SK-N-SH (cell line): ENCODE measurements at regions of chr13 and their contacts with region 1.

Region 1: DNA sequence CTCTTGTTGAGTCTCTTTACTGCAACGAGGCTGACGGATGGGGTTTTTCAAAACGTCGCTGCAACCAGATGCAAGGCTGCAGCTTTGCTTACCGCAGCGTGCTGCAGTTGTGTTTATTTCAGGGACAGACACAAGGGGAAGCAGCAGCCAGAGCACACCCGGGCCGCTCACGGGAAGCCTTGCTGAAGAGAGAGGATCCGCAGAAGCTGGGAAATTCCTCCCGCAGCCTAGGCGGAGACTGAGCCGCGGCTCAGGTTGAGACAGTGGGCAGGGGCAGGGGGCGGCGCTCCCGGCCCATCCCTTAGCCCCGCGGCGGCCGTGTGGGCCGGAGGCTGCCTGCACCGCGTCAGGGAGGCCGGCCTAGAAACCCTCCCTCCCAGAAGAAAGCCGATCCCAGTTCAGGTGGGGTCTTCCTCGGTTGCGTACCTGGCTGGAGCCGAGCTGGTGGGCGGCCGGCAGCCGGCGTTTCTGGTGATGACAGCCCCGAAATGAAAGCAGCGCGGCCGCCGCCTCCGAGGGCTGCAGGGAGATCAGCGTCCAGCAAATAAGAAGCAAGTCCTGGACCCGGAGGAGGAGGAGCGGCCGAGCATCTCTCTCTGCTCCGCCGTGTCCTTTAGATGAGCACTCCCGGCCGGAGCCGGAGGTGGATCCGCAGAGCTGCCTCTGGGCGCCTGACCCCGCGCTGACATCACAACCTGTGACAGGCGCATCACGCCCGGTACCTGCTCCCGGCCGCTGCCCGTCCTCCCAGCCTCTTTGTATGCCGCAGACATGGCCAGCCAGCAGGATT is at the start of gene FRY:
- DNase-seq: peak; percentile 81
- H3K4me3 ChIP-seq: peak within 1 kb of the TSS; percentile 78 to 83
- H3K27ac ChIP-seq: peak within 1 kb of the TSS; percentile 50 to 85; a peak in 3 of 4 replicates
- H3K4me1 ChIP-seq: peaks cover 0 to 6% of the 10 kb centered on the region in 2 experiments; a peak in 2 of 4 replicates
- H3K27me3 ChIP-seq: no peaks in the 10 kb centered on the region
- CTCF ChIP-seq: no peak
- EP300 ChIP-seq: no peak
- RAD21 ChIP-seq: peak; percentile 46
- polyA plus RNA-seq, gene FRY: 1.4 and 2.1 TPM in 2 replicates

Region 2: DNA sequence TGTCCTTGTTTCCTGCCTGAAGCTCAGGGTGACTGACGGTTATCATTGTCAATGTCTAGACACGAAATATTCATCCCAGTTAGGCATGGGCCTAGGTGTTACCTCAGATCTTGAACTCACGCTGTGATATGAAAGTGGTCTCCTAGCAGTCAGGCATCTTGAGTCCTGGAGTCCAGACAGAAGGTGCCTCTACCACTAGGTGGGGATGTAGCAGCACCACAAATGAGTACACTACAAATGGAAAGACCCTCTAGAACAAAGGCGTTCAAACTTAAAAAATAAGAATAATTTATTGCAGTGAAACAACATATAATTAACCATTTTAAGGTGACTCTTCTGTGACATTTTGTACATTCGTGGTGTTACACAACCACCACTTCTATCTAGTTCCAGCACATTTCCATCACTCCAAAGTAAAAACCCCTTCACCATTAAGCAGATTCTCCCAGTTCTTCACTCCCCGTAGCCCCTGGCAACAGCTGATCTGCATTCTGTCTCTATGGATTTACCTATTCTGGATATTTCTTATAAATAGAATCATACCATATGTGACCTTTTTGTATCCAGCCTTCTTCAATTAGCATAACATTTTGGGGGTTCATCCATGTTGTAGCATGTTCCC is 11.5 kb before region 1 on chr13:
- CTCF ChIA-PET with region 1: interaction called, 11 read pairs
- POLR2A ChIA-PET with region 1: no interaction called
- DNase-seq: peak; percentile 55
- H3K4me3 ChIP-seq: no peak overlapping the region; a peak in 1 of 4 replicates
- H3K27ac ChIP-seq: no peak overlapping the region
- H3K4me1 ChIP-seq: peaks cover 0 to 3% of the 10 kb centered on the region in 2 experiments; a peak in 1 of 4 replicates
- H3K27me3 ChIP-seq: no peaks in the 10 kb centered on the region
- CTCF ChIP-seq: peak; percentile 79
- EP300 ChIP-seq: no peak
- RAD21 ChIP-seq: peak; percentile 85

Region 3: GRCh38 chr13:32164622-32165268 is 133.5 kb after region 1 on chr13:
- CTCF ChIA-PET with region 1: interaction called, 17 read pairs
- POLR2A ChIA-PET with region 1: no interaction called
- DNase-seq: peak; percentile 46
- H3K4me3 ChIP-seq: no peak overlapping the region; a peak in 1 of 4 replicates
- H3K27ac ChIP-seq: no peak overlapping the region; a peak in 1 of 4 replicates
- H3K4me1 ChIP-seq: peaks cover 0 to 7% of the 10 kb centered on the region in 2 experiments; a peak in 2 of 4 replicates
- H3K27me3 ChIP-seq: no peaks in the 10 kb centered on the region
- CTCF ChIP-seq: peak; percentile 76
- EP300 ChIP-seq: no peak
- RAD21 ChIP-seq: peak; percentile 60